Gastrocnemius medialis (tissue), 4 donors: ENCODE measurements at regions of chr10 and their contacts with region 1.

Region 1: GRCh38 chr10:21732067-21732772 is 198.2 kb downstream of the MLLT10 start:
- DNase-seq: peak; percentile 38 to 61
- ATAC-seq: peak; percentile 86
- H3K4me3 ChIP-seq: no peak overlapping the region
- H3K27ac ChIP-seq: no peak overlapping the region
- H3K4me1 ChIP-seq: no peaks in the 10 kb centered on the region
- H3K27me3 ChIP-seq: no peaks in the 10 kb centered on the region
- CTCF ChIP-seq: peak; percentile 66 to 90 (median 82)
- POLR2A ChIP-seq: no peak

Region 2: DNA sequence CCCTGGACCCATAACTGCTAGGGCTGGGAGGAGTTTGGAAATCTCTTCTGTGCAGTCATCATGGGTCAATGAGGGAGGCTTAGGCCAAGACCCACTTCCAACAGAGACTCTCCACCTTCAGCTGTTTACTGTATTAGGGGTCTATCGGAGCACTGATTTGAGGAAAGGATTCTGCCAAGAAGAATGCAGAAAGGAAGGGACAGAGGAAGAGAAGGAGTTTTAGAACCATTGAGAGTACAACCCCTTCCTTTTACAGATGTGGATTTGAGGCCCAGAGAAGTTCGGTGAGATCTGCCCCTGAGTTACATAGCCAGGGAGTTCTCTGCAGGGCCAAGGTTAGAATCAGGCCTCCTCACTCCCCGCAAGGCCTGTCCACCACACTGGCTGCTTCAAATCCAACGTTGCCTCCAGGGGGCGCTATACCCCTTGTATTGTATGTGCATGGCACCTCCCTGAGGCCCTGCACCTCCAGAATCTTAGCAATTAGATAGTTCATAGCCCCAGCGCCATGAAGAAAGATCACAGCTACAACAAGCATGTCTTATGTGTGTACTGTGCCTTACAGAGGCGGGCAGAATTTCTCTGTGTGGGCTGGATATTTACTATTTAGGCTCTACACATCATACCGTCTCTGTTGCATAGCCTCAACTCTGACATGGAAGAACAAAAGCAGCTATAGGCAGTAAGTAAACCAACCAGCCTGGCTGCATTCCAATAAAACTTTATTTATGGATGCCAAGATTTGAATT is 453.6 kb before region 1 on chr10:
- in situ Hi-C with region 1: loop called in 2 of 4 experiments (anchors 25 kb)
- intact Hi-C with region 1: no loop called
- DNase-seq: peak; percentile 50 to 61
- ATAC-seq: peak; percentile 33 to 51
- H3K4me3 ChIP-seq: no peak overlapping the region
- H3K27ac ChIP-seq: no peak overlapping the region
- H3K4me1 ChIP-seq: no peaks in the 10 kb centered on the region
- H3K27me3 ChIP-seq: no peaks in the 10 kb centered on the region
- CTCF ChIP-seq: peak in 4 of 5 experiments; percentile 53 to 61 (median 56)
- POLR2A ChIP-seq: no peak

Region 3: GRCh38 chr10:22097696-22098095 is 365.5 kb after region 1 on chr10:
- in situ Hi-C with region 1: no loop called
- intact Hi-C with region 1: no loop called
- DNase-seq: no peak
- ATAC-seq: no peak
- H3K4me3 ChIP-seq: no peak overlapping the region
- H3K27ac ChIP-seq: no peak overlapping the region
- H3K4me1 ChIP-seq: no peaks in the 10 kb centered on the region
- H3K27me3 ChIP-seq: no peaks in the 10 kb centered on the region
- CTCF ChIP-seq: no peak
- POLR2A ChIP-seq: no peak

Region 4: DNA sequence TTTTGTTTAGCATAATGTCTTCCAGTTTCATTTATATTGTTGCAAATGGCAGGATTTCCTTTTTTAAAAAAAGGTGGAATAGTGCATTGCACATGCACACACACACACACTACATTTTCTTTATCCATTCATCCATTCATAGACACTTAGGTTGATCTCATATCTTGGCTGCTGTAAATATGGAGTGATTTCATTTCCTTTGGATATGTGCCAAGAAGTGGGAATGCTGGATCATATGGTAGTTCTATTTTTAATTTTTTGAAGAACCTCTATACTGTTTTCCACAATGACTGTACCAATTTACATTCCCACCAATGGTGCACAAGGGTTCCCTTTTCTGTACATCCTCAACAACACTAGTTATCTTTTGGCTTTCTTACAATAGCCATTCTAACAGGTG is 416.7 kb after region 1 on chr10:
- in situ Hi-C with region 1: no loop called
- intact Hi-C with region 1: no loop called
- DNase-seq: no peak
- ATAC-seq: no peak
- H3K4me3 ChIP-seq: no peak overlapping the region
- H3K27ac ChIP-seq: no peak overlapping the region
- H3K4me1 ChIP-seq: no peaks in the 10 kb centered on the region
- H3K27me3 ChIP-seq: no peaks in the 10 kb centered on the region
- CTCF ChIP-seq: no peak
- POLR2A ChIP-seq: no peak